ENCODE measurements at regions of chr7 and their contacts with region 1.

Region 1: GRCh38 chr7:2720582-2721491 is 32.8 kb downstream of the AMZ1 start:
- DNase-seq: peak; percentile 84
- ATAC-seq: peak; percentile 80
- H3K4me3 ChIP-seq: no peak overlapping the region
- H3K4me3 Mint-ChIP-seq: peak overlapping the region; percentile 31
- H3K27ac ChIP-seq: peak overlapping the region; percentile 19 to 50
- H3K27ac Mint-ChIP-seq: peak overlapping the region; percentile 80
- H3K4me1 ChIP-seq: peaks cover 42 to 57% of the 10 kb centered on the region in 2 donors
- H3K4me1 Mint-ChIP-seq: peaks cover 60% of the 10 kb centered on the region
- H3K27me3 ChIP-seq: no peaks in the 10 kb centered on the region
- H3K27me3 Mint-ChIP-seq: no peaks in the 10 kb centered on the region
- CTCF ChIP-seq: no peak

Region 2: GRCh38 chr7:2371329-2371728 is 349.5 kb before region 1 on chr7:
- CTCF ChIA-PET with region 1: no interaction called
- POLR2A ChIA-PET with region 1: no interaction called
- intact Hi-C with region 1: no loop called
- DNase-seq: no peak
- ATAC-seq: no peak
- H3K4me3 ChIP-seq: no peak overlapping the region
- H3K4me3 Mint-ChIP-seq: no peak overlapping the region
- H3K27ac ChIP-seq: no peak overlapping the region
- H3K27ac Mint-ChIP-seq: no peak overlapping the region
- H3K4me1 ChIP-seq: no peaks in the 10 kb centered on the region
- H3K4me1 Mint-ChIP-seq: no peaks in the 10 kb centered on the region
- H3K27me3 ChIP-seq: no peaks in the 10 kb centered on the region
- H3K27me3 Mint-ChIP-seq: no peaks in the 10 kb centered on the region
- CTCF ChIP-seq: no peak

Region 3: DNA sequence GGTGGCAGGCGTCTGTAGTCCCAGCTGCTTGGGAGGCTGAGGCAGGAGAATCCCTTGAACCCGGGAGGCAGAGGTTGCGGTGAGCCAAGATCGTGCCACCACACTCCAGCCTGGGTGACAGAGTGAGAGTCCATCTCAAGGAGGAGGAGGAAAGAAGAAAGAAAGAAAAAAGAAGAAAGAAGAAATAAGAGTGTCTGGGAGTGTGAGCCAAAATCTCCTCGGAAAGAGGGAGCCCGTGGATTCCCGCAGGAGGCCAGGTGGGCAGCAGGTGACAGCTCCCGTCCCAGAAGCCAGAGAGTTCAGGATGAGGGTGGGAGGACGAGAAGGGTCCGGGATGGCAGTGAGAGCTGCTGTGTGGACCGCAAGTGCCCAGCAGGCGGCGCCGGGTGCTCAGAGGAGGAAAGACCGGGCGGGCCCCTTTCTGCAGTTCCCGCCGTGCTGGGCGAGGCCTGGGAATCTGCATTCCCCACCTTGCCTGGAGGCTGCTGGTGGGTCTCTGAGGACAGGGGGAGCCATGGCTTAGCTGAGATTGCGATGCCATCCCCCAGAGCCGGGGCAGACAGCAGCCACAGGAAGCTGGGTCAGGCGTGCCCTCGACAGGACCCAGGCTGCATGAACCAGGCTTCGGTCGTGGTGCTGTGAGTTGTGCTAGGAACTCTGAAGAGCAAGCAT is 50.0 kb before region 1 on chr7:
- CTCF ChIA-PET with region 1: interaction called, 6 read pairs
- POLR2A ChIA-PET with region 1: no interaction called
- intact Hi-C with region 1: loop called (anchors 1 kb)
- DNase-seq: peak; percentile 79
- ATAC-seq: peak; percentile 88
- H3K4me3 ChIP-seq: no peak overlapping the region
- H3K4me3 Mint-ChIP-seq: no peak overlapping the region
- H3K27ac ChIP-seq: no peak overlapping the region
- H3K27ac Mint-ChIP-seq: no peak overlapping the region
- H3K4me1 ChIP-seq: peaks cover 6 to 8% of the 10 kb centered on the region in 2 donors
- H3K4me1 Mint-ChIP-seq: peaks cover 6% of the 10 kb centered on the region
- H3K27me3 ChIP-seq: peaks cover 0 to 2% (median 0%) of the 10 kb centered on the region in 4 experiments
- H3K27me3 Mint-ChIP-seq: peaks cover 10% of the 10 kb centered on the region
- CTCF ChIP-seq: peak; percentile 87

Region 4: DNA sequence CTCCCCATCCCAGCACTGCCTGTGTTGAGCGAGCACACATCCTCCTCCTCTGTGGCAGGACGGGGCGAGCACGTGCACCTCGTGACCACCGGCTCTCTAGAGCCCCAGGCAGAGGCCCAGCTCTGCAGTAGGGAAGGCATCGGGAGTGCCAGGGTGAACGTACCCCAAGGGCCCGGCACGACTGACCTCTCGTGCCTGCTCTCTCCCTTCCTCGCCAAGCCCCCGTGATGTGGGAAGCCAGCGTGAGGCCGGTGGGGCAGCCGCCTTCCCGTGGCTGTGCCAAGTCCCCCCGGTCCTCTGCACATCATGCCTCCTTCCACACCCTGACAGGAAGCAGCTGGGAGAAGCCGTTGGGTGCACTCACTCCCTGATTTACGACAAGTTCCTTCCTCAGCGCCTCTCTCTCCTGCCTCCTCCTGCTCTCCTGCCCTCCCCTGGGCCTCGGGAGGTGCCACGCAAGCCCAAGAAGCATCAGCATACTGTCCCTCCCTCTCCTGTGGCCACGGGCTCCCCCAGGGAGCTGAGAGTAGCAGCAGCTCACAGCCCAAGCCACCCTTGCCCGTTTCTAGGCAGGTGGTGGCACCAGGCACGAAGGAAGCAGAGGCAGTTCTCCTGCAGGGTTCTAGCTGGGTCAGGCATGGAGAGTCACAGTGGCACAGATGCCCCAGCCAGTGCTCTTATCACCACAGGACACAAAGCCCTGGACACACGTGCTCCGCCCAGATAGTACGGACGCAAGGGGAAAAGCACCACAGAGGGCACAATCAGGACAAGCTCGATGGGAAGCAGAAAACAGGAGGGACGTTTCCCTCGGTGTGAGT is 14.1 kb after region 1 on chr7:
- CTCF ChIA-PET with region 1: interaction called, 7 read pairs
- POLR2A ChIA-PET with region 1: interaction called, 3 read pairs
- intact Hi-C with region 1: loop called (anchors 2 kb)
- DNase-seq: peak; percentile 54
- ATAC-seq: peak; percentile 38
- H3K4me3 ChIP-seq: peak overlapping the region in 2 of 5 experiments; percentile 12 to 17
- H3K4me3 Mint-ChIP-seq: peak overlapping the region; percentile 81
- H3K27ac ChIP-seq: no peak overlapping the region
- H3K27ac Mint-ChIP-seq: peak overlapping the region; percentile 76
- H3K4me1 ChIP-seq: peaks cover 41 to 57% of the 10 kb centered on the region in 2 donors
- H3K4me1 Mint-ChIP-seq: peaks cover 56% of the 10 kb centered on the region
- H3K27me3 ChIP-seq: no peaks in the 10 kb centered on the region
- H3K27me3 Mint-ChIP-seq: no peaks in the 10 kb centered on the region
- CTCF ChIP-seq: no peak

Region 5: GRCh38 chr7:2844165-2844898 is 123.5 kb after region 1 on chr7 and contains the start of gene GNA12:
- CTCF ChIA-PET with region 1: interaction called, 3 read pairs
- POLR2A ChIA-PET with region 1: no interaction called
- intact Hi-C with region 1: loop called (anchors 5 kb)
- DNase-seq: peak; percentile 98
- ATAC-seq: peak; percentile 93
- H3K4me3 ChIP-seq: peak within 1 kb of the TSS; percentile 50 to 70 (median 65)
- H3K4me3 Mint-ChIP-seq: peak within 1 kb of the TSS; percentile 95
- H3K27ac ChIP-seq: peak within 1 kb of the TSS in 1 of 2 donors; percentile 53
- H3K27ac Mint-ChIP-seq: peak within 1 kb of the TSS; percentile 80
- H3K4me1 ChIP-seq: peaks cover 34 to 45% of the 10 kb centered on the region in 2 donors
- H3K4me1 Mint-ChIP-seq: peaks cover 51% of the 10 kb centered on the region
- H3K27me3 ChIP-seq: no peaks in the 10 kb centered on the region
- H3K27me3 Mint-ChIP-seq: no peaks in the 10 kb centered on the region
- CTCF ChIP-seq: no peak
- total RNA-seq, gene GNA12: 110 and 114 TPM in 2 replicates

Measured in B cell (primary cell).